ENCODE measurements at regions of chr7 and their contacts with region 1.

Region 1: GRCh38 chr7:21850531-21851285 is 95.0 kb downstream of the CDCA7L start:
- DNase-seq: no peak
- H3K4me3 ChIP-seq: no peak overlapping the region
- H3K27ac ChIP-seq: no peak overlapping the region
- H3K4me1 ChIP-seq: no peaks in the 10 kb centered on the region
- H3K27me3 ChIP-seq: no peaks in the 10 kb centered on the region
- CTCF ChIP-seq: no peak
- EP300 ChIP-seq: no peak
- POLR2A ChIP-seq: no peak

Region 2: DNA sequence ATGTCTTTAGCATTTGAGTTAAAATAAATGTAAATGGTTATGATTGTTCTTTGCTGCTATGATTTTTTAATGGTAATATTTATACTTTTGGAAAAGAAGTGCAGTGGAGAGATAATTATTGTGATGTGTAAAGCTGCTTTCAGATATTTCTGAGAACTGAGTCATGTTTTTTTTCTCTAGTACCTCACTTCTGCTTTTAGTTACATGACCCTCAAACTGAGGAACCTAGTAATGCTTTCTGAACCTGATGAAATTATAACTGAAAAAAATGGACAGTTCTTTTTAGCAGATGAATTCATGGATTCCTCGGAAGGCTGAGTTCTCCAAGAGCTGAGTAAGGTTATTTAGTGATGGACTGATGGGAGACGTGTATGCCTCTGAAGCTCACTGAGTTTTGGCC is 72.8 kb before region 1 on chr7:
- in situ Hi-C with region 1: no loop called
- intact Hi-C with region 1: loop called (anchors 2 kb)
- DNase-seq: no peak
- H3K4me3 ChIP-seq: no peak overlapping the region
- H3K27ac ChIP-seq: no peak overlapping the region
- H3K4me1 ChIP-seq: no peaks in the 10 kb centered on the region
- H3K27me3 ChIP-seq: no peaks in the 10 kb centered on the region
- CTCF ChIP-seq: no peak
- EP300 ChIP-seq: no peak
- POLR2A ChIP-seq: no peak

Region 3: DNA sequence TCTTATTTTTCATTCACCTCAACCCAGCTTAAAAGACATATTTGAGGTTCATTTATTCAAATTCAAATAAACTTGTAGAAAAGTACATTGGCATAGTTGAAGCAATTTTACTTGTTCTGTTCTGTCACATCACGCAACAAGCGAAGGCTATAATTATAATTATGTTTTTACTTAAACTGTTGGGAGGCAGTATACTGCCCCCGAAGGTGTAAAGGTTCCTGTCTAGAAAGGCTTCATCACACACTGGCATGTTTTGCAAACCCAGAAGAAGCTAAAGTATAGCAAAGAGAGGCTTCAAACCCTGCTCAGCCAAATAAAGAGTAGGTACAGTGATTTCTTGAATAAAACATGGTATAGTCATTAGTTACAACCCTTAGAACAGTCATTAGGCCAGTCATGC is 32.4 kb after region 1 on chr7:
- in situ Hi-C with region 1: no loop called
- intact Hi-C with region 1: no loop called
- DNase-seq: no peak
- H3K4me3 ChIP-seq: no peak overlapping the region
- H3K27ac ChIP-seq: no peak overlapping the region
- H3K4me1 ChIP-seq: no peaks in the 10 kb centered on the region
- H3K27me3 ChIP-seq: no peaks in the 10 kb centered on the region
- CTCF ChIP-seq: no peak
- EP300 ChIP-seq: no peak
- POLR2A ChIP-seq: no peak

Measured in transverse colon (tissue), 4 donors.